Right ventricle myocardium inferior (tissue), 1 donor: ENCODE measurements at regions of chr15 and their contacts with region 1.

Region 1: GRCh38 chr15:58749532-58750337 is at the start of gene ADAM10:
- DNase-seq: peak; percentile 100
- ATAC-seq: peak; percentile 98
- total RNA-seq, gene ADAM10: 64.9 TPM

Region 2: DNA sequence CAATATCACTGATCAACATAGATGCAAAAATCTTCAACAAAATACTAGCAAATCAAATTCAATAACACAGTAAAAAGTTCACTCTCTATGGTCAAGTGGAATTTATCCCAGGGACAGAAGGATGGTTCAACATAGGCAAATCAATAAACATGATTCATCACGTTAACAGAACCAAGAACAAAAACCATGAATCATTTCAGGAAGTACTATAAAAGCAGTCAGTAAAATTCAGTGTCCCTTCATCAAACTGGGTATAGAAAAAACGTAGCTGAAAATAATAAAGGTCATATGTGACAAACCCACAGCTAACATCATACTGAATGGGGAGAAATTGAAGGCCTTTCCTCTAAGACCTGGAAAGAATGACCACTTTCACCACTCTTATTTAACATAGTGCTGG is 871.2 kb before region 1 on chr15:
- intact Hi-C with region 1: no loop called
- DNase-seq: no peak
- ATAC-seq: no peak

Region 3: DNA sequence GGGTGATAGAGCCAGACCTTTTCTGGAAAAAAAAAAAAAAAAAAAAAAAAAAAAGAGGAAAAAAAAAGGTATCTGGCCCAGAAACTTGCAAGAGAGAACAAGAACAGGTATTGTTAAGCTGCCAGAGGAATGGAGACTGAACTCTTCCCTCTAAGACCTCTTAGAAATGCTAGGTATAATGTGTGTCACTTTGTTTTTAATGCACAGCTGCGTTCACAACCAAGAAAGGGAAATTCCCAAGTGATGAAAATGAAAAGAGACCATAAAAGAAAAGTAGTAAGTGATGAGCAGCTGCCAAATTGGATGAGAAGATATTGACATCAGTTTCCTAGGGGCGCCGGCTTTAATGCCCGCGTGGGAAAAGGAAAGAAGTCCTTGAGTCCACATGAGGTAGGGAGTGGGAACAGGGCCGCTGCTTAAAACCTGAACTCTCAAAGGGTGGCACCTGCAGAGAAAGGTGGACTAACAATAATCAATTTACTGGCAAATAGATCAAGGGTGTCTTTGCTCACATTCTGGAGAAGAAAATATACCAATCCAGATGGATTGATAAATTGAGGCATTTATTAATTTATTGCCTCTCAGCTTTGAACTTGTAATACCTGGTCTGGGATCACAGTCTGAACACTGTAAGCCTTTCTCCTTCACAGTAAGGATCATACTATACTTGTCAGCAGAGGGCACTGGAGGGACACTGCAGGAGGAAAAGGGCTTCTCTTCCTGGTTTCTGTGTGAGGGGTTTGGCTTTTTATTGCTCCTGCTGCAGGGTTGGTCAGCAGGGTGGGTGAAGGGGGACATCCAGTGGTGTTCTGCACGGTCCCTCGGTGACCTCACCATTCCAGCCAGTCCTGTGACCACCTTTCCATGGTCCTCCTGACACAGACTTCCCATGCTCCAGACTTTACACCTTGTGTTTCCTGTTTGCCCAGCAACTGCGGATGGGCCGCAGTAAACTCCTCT is 480.0 kb before region 1 on chr15:
- intact Hi-C with region 1: loop called (anchors 5 kb)
- DNase-seq: no peak
- ATAC-seq: peak; percentile 92

Region 4: DNA sequence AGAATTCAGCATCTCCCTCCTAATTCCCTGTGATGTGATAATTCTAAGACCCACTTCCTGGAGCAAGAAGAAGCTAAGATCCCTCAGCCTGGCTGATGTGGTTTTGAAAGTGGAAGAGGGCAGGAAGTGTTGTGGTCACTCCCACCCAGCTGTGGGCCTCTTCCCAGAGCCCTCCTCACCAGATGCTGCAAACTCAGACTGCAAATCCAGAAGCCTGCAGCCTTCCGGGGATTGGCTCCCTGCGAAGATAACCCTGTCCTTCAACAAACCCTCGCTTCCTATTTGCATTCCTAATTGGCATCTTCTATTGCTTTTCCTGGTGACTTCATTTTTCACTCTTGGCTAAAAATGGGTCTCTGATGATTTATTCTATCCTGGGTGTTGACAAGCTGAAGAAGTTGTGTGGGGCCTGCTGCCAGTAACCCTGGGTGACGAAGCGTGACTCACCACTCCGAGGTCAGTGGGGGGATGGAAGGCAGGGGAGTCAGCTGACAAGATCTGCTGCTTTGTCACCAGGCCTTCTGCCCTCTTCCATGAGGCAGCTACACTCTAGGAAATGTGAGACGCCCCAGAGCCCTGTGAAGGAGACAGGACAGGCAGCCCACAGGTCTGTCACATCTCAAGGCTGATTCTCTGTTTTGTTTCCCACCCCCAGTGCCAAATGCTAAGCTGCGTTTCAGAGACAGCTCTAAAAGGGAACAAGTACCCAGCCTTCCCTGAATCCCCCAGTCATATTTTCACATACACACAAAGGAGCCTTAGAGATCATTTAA is 417.6 kb before region 1 on chr15:
- intact Hi-C with region 1: loop called (anchors 5 kb)
- DNase-seq: peak; percentile 94
- ATAC-seq: peak; percentile 98

Region 5: DNA sequence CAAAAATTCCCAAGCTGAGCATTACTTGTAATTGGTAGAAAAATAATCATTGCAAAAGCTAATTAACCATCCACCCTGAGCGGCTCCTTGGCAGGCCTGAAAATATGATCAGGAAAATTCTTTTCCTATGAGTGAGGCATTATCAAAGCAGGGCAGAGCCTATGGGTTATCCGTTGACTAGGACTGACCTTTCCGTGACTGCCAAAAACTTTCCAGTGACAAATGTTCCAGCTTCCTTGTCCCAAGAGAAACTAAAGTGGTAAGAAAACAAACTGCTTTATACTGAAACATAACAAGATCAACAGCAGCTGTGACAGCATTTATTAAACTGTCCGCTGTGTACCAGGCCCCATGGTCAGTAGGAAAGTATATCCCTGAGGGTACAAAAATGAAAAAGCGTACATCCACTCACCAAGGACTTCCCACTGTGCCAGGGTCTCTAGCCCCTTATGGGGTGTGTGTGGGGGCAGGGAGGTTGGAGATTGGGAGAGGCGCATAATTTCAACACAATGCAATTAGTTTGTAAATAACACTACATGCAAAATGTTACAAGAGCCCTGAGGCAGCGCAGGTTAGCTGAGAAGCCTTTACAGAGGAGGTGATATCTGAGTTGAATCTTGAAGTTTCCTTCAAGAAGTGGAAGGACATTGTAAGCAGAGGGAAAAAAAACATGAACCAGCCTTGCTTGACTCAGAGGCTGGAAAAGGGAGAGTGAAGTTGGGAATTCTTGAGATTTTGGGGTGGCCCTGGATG is 309.4 kb before region 1 on chr15:
- intact Hi-C with region 1: loop called (anchors 5 kb)
- DNase-seq: no peak
- ATAC-seq: peak; percentile 85

Region 6: GRCh38 chr15:58546635-58547627 is 202.8 kb before region 1 on chr15:
- intact Hi-C with region 1: loop called (anchors 10 kb)
- DNase-seq: no peak
- ATAC-seq: peak; percentile 90

Region 7: GRCh38 chr15:58677426-58677825 is 72.3 kb before region 1 on chr15:
- intact Hi-C with region 1: loop called (anchors 5 kb)
- DNase-seq: no peak
- ATAC-seq: no peak

Region 8: GRCh38 chr15:58770857-58771620 is 21.3 kb after region 1 on chr15 and contains the start of gene MINDY2:
- intact Hi-C with region 1: loop called (anchors 1 kb)
- DNase-seq: peak; percentile 100
- ATAC-seq: peak; percentile 99
- total RNA-seq, gene MINDY2: 38.2 TPM

Region 9: GRCh38 chr15:58839485-58839884 is 89.8 kb after region 1 on chr15:
- intact Hi-C with region 1: no loop called
- DNase-seq: no peak
- ATAC-seq: no peak